Caco-2 (cell line): ENCODE measurements at regions of chr2 and their contacts with region 1.

Region 1: DNA sequence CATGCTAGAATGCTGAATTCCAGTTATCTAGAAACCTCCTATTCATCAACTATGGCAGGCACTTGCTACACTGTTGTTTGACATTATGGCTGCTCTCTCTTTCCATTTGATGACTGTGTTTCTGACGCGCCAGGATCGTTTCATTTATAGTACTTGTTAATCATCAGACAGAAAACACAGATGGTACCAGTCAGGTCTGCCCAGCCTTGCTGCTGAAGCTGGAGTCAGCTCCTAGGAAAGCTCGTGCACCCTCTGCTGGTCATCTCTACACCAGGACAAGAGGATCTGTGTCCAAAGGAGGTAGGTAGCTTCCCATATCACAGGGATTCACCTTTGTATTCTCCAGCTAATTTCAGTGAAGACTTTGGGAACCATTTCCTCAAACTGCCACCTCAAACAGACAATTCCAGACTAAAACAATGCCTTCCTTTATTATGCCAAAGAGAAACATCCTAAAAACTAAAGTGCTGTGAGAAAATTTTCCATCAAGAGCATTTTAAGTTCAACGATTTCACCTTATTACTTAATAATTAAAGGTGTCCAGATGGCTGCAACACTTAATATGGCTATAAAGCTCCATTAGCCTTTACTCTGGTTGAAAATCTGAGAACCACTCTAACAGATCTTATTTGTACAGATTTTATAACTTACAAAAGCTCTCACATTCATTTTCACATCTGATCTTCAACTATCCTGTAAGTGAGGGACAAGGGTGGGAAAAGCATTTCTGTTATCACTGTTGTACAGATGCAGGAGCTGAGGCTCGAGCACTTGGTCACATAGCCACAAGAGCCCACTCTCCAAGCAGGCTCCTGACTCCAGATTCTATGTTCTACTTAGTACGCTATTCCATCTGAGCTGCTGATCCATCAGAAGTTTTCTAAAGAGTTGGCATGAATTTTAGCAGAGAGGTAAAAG is 17.5 kb downstream of the METTL8 start:
- DNase-seq: peak; percentile 89 to 94
- H3K4me3 ChIP-seq: no peak overlapping the region
- H3K4me3 Mint-ChIP-seq: peak overlapping the region; percentile 61
- H3K27ac Mint-ChIP-seq: peak overlapping the region; percentile 63
- H3K4me1 ChIP-seq: peaks cover 3% of the 10 kb centered on the region; the same call in 1 of the 2 replicates
- H3K4me1 Mint-ChIP-seq: peaks cover 9% of the 10 kb centered on the region
- H3K27me3 ChIP-seq: no peaks in the 10 kb centered on the region
- H3K27me3 Mint-ChIP-seq: no peaks in the 10 kb centered on the region
- CTCF ChIP-seq: peak; percentile 75 to 92

Region 2: GRCh38 chr2:171244970-171245782 is 171.1 kb before region 1 on chr2:
- CTCF ChIA-PET with region 1: no interaction called
- POLR2A ChIA-PET with region 1: no interaction called
- intact Hi-C with region 1: no loop called
- DNase-seq: peak in 1 of 2 experiments; percentile 22
- H3K4me3 ChIP-seq: no peak overlapping the region
- H3K4me3 Mint-ChIP-seq: no peak overlapping the region
- H3K27ac Mint-ChIP-seq: no peak overlapping the region
- H3K4me1 ChIP-seq: no peaks in the 10 kb centered on the region
- H3K4me1 Mint-ChIP-seq: peaks cover 6% of the 10 kb centered on the region
- H3K27me3 ChIP-seq: no peaks in the 10 kb centered on the region
- H3K27me3 Mint-ChIP-seq: no peaks in the 10 kb centered on the region
- CTCF ChIP-seq: no peak

Region 3: GRCh38 chr2:171260471-171261424 is 155.5 kb before region 1 on chr2:
- CTCF ChIA-PET with region 1: interaction called, 7 read pairs
- POLR2A ChIA-PET with region 1: no interaction called
- intact Hi-C with region 1: loop called (anchors 10 kb)
- DNase-seq: no peak
- H3K4me3 ChIP-seq: no peak overlapping the region
- H3K4me3 Mint-ChIP-seq: no peak overlapping the region
- H3K27ac Mint-ChIP-seq: no peak overlapping the region
- H3K4me1 ChIP-seq: peaks cover 14% of the 10 kb centered on the region; the same call in 1 of the 2 replicates
- H3K4me1 Mint-ChIP-seq: peaks cover 12% of the 10 kb centered on the region
- H3K27me3 ChIP-seq: no peaks in the 10 kb centered on the region
- H3K27me3 Mint-ChIP-seq: no peaks in the 10 kb centered on the region
- CTCF ChIP-seq: no peak

Region 4: GRCh38 chr2:171347591-171348032 is 68.7 kb before region 1 on chr2:
- CTCF ChIA-PET with region 1: no interaction called
- POLR2A ChIA-PET with region 1: no interaction called
- intact Hi-C with region 1: loop called (anchors 1 kb)
- DNase-seq: no peak
- H3K4me3 ChIP-seq: no peak overlapping the region
- H3K4me3 Mint-ChIP-seq: no peak overlapping the region
- H3K27ac Mint-ChIP-seq: no peak overlapping the region
- H3K4me1 ChIP-seq: no peaks in the 10 kb centered on the region
- H3K4me1 Mint-ChIP-seq: peaks cover 7% of the 10 kb centered on the region
- H3K27me3 ChIP-seq: no peaks in the 10 kb centered on the region
- H3K27me3 Mint-ChIP-seq: no peaks in the 10 kb centered on the region
- CTCF ChIP-seq: no peak

Region 5: GRCh38 chr2:171629113-171629512 is 212.8 kb after region 1 on chr2:
- CTCF ChIA-PET with region 1: no interaction called
- POLR2A ChIA-PET with region 1: no interaction called
- intact Hi-C with region 1: no loop called
- DNase-seq: no peak
- H3K4me3 ChIP-seq: no peak overlapping the region
- H3K4me3 Mint-ChIP-seq: no peak overlapping the region
- H3K27ac Mint-ChIP-seq: no peak overlapping the region
- H3K4me1 ChIP-seq: no peaks in the 10 kb centered on the region
- H3K4me1 Mint-ChIP-seq: no peaks in the 10 kb centered on the region
- H3K27me3 ChIP-seq: no peaks in the 10 kb centered on the region
- H3K27me3 Mint-ChIP-seq: no peaks in the 10 kb centered on the region
- CTCF ChIP-seq: no peak

Region 6: DNA sequence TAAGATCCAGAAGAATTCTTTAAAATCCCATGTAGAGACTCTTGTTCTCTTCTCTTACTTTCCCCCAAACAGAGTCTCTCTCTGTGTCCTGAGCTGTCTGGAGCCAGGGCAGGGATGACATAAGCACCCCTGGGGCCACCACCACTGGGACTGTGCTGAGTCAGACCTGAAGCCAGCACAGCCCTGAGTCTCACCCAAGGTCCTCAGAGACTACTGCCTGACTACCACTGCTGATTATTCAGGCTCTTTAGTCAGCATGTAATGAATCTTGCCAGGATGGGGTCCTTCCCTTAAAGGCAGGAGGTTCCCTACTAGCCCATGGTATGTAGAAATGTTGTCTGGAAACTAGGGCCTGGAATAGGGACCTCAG is 236.1 kb after region 1 on chr2:
- CTCF ChIA-PET with region 1: no interaction called
- POLR2A ChIA-PET with region 1: no interaction called
- intact Hi-C with region 1: no loop called
- DNase-seq: no peak
- H3K4me3 ChIP-seq: no peak overlapping the region
- H3K4me3 Mint-ChIP-seq: no peak overlapping the region
- H3K27ac Mint-ChIP-seq: no peak overlapping the region
- H3K4me1 ChIP-seq: no peaks in the 10 kb centered on the region
- H3K4me1 Mint-ChIP-seq: no peaks in the 10 kb centered on the region
- H3K27me3 ChIP-seq: no peaks in the 10 kb centered on the region
- H3K27me3 Mint-ChIP-seq: peaks cover 11% of the 10 kb centered on the region
- CTCF ChIP-seq: no peak